ENCODE measurements at regions of chr17 and their contacts with region 1.

Region 1: DNA sequence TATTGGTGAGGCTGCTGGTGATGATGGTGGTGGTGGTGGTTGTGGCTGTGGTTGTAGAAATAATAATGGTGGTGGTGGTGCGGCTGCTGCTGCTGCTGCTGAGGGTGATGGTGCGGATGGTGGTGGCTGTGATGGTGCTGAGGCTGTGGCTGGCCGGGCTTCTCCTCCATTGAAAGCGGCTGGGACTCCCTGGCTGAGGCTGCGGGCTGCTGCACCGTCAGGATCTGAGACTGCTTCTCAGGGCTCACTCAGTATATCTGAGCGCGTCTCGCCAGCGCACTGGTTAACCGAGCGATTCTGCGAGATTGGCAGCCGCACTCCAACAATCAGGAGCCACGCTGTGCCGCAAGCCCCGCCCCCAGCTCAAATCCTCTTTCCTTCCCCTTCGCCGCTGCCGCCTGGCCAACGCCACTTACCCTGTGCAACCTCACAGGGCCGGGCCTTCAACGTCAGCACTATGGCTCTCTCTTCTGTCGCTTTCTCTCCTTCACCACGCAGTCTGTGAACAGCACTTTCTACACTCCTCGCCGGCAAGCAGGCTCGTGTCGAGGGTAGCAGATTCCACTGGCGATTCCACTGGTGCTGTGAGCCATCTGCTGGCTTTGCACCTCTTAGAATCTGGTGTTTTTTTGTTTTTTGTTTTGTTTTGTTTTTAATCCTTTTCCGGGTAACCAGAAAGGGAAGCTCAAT is at the start of gene NUFIP2:
- DNase-seq: peak; percentile 99 to 100 (median 100)

Region 2: DNA sequence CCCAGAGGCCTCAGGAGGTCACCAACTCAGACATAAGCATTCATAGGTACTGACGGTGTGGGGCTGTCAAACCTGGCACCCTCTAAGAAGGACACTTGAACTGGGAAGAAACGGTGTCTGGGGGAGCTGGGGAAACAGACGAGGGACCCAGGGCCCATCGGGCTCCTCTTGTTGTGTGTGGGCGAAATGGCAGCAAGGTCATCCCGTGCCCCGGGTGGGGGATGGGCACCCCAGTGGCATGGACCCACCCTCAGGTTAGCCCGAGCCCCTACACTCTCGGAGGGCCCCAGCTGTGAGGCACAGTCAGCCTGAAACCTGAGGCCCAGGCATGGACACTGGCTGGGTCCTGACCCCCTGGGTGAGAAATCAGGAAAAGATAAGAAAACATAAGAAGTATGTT is 171.0 kb before region 1 on chr17:
- intact Hi-C with region 1: loop called (anchors 2 kb)
- DNase-seq: no peak

Region 3: GRCh38 chr17:29148790-29149430 is 145.1 kb before region 1 on chr17:
- intact Hi-C with region 1: loop called (anchors 2 kb)
- DNase-seq: peak; percentile 86 to 99 (median 92)

Region 4: DNA sequence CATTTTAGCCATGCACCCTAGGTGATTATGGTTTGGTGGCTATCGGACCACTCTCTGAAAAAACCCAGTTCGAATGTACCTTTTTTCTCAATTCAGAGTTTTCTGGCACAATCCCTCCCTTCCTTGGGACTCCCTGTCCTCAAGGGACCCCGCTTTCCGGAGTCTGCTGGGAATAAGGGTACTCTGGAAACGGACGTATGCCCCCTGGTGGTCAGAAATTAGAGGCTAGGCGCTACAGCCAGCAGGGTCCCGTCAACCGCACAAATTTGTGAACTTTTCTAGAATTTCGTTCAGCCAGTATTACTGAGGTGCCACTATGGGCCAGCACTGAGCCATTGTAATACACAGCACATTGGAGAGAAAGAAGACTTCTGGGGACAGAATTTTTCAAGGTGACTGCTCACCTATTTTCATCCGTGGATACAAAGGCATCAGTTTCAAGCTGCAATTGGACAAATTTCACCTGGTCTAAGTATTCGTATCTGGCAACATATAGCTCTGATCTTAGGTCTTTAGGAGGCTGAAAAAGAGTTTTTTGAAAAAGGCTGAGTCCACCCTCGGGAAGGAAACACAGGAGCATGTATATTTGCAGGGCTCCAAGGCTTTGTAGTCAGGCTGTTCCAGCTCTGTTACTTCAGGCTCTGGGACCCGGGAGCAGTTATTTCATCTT is 74.5 kb before region 1 on chr17:
- intact Hi-C with region 1: loop called (anchors 2 kb)
- DNase-seq: peak; percentile 63 to 96 (median 87)

Region 5: DNA sequence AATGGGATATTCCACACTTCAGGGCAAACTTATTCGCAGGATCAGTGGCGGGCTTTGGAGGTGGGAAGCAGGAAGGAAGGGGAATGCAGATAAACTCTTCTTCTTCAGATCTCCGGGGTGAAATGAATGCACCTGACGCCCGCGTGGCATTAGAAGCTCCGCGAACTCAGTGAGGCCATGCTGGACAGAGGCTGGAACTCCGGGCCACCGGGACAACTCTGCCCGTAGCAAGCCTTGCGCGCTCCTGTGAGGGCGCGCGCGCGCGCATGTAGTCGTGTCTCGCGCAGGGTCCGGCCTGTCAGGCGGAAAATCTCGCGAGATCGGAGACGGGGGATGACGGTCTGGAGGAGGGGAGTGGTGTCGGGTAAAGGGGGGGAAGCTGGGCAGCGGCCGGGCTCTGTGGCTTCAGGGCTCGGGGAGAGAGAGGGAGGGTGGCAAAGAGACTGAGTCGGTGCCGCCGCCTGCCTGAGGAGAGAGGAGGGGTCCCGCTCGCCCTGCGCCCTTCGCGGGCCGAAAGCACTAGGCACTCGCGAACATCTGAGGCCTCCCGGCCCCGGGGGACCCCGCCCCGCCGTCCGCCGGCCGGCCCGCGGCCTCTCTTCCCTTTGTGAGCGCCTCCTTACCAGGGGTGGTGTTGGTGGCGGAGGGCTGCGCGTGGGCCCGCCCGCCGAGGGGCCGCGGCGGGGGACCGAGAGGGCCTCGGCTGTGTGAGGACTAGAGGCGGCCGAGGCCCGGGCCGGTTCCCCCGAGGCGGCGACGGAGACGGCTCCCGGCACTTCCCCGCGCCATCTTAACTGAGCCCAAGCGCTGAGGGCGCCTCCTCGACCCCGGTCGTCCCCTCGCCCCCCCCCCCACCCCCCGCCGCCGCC is 96.2 kb after region 1 on chr17 and contains the start of gene TAOK1:
- intact Hi-C with region 1: loop called (anchors 5 kb)
- DNase-seq: peak; percentile 98 to 100 (median 99)